ENCODE measurements at regions of chr3 and their contacts with region 1.

Region 1: GRCh38 chr3:39406368-39407258 is at the start of gene RPSA:
- DNase-seq: peak; percentile 90 to 99 (median 94)
- ATAC-seq: peak; percentile 90
- H3K4me3 ChIP-seq: peak within 1 kb of the TSS; percentile 78
- H3K4me3 Mint-ChIP-seq: peak within 1 kb of the TSS; percentile 86
- H3K27ac ChIP-seq: peak within 1 kb of the TSS; percentile 76 to 88
- H3K27ac Mint-ChIP-seq: peak within 1 kb of the TSS; percentile 88
- H3K4me1 ChIP-seq: peaks cover 38% of the 10 kb centered on the region
- H3K4me1 Mint-ChIP-seq: peaks cover 48% of the 10 kb centered on the region
- H3K27me3 ChIP-seq: no peaks in the 10 kb centered on the region
- H3K27me3 Mint-ChIP-seq: no peaks in the 10 kb centered on the region
- CTCF ChIP-seq: peak; percentile 27
- total RNA-seq, gene RPSA: 1,930 to 1,974 TPM

Region 2: DNA sequence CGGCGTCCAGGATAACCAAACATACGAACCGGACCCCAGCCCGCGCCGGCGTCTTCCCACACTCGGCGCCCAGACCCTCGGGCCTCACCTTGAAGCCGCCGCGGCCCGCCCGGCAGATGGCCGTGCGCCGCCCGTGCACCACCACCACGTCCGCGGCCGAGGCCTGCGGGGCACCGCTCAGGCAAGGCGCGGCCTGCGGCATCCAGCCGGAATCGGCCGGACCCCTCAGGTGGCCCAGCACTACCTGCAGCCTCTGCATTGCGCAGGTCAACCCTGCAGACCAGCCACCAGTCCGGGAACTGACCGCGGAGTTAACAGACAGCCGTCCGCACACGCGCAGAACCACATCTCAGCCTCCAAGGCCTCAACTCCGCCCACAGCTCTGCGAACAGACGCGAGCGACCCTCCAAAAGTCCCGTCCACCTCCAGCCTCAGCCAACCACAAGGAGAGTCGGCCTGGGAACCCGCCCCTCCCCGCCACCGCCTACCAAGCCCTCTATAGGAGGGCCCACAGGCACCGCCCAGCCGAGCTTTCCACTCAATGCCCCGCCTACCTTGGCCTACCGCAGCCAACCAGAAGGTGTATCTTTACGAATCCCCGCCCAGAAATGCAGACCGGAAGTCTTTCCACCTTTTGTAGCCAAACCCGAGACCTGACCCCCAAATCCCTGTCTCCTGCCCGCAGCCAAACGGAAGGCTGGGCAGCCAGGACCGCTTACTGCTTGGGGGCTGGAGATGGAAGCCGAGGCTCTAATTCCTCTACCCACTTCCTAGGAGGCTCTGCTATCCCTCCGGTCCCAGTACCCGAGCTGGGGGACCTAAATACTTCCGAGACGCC is 1269.6 kb before region 1 on chr3 and contains the start of gene ACAA1:
- CTCF ChIA-PET with region 1: no interaction called
- POLR2A ChIA-PET with region 1: interaction called, 3 read pairs
- intact Hi-C with region 1: loop called in 1 of 2 experiments (anchors 10 kb)
- DNase-seq: peak; percentile 91 to 99 (median 96)
- ATAC-seq: peak; percentile 84
- H3K4me3 ChIP-seq: peak within 1 kb of the TSS; percentile 95
- H3K4me3 Mint-ChIP-seq: peak within 1 kb of the TSS; percentile 99
- H3K27ac ChIP-seq: peak within 1 kb of the TSS; percentile 80 to 83
- H3K27ac Mint-ChIP-seq: peak within 1 kb of the TSS; percentile 92
- H3K4me1 ChIP-seq: peaks cover 76% of the 10 kb centered on the region
- H3K4me1 Mint-ChIP-seq: peaks cover 77% of the 10 kb centered on the region
- H3K27me3 ChIP-seq: no peaks in the 10 kb centered on the region
- H3K27me3 Mint-ChIP-seq: no peaks in the 10 kb centered on the region
- CTCF ChIP-seq: no peak
- total RNA-seq, gene ACAA1: 56.4 to 58.9 TPM

Region 3: DNA sequence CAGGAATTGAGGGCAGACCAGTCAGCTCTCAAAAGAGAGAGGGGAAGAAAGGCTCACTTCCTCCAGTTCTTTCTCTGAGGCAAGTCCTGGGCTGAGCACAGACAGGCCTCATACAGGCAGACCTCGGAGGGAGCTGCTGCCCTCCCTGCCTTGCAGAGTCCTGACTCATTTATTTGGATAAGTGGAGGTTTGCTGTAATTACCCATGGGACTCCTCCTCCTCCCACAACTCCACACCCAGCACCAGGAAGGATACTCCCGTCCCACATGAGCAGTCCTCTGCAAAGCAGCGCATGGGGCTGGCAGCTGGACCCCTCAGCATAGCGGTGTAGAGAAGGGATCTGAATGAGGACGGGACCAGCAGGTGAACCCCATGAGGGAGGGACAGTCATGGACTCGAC is 577.2 kb before region 1 on chr3:
- CTCF ChIA-PET with region 1: no interaction called
- POLR2A ChIA-PET with region 1: no interaction called
- intact Hi-C with region 1: no loop called
- DNase-seq: no peak
- ATAC-seq: no peak
- H3K4me3 ChIP-seq: no peak overlapping the region
- H3K4me3 Mint-ChIP-seq: no peak overlapping the region
- H3K27ac ChIP-seq: no peak overlapping the region
- H3K27ac Mint-ChIP-seq: no peak overlapping the region
- H3K4me1 ChIP-seq: peaks cover 5% of the 10 kb centered on the region
- H3K4me1 Mint-ChIP-seq: peaks cover 4% of the 10 kb centered on the region
- H3K27me3 ChIP-seq: no peaks in the 10 kb centered on the region
- H3K27me3 Mint-ChIP-seq: peaks cover 8% of the 10 kb centered on the region
- CTCF ChIP-seq: no peak

Region 4: GRCh38 chr3:39378088-39378487 is 28.5 kb before region 1 on chr3:
- CTCF ChIA-PET with region 1: interaction called, 12 read pairs
- POLR2A ChIA-PET with region 1: interaction called, 3 read pairs
- intact Hi-C with region 1: loop called in 1 of 2 experiments (anchors 1 kb)
- DNase-seq: peak; percentile 28 to 82 (median 50)
- ATAC-seq: peak; percentile 85
- H3K4me3 ChIP-seq: no peak overlapping the region
- H3K4me3 Mint-ChIP-seq: peak overlapping the region; percentile 26
- H3K27ac ChIP-seq: no peak overlapping the region
- H3K27ac Mint-ChIP-seq: no peak overlapping the region
- H3K4me1 ChIP-seq: peaks cover 13% of the 10 kb centered on the region
- H3K4me1 Mint-ChIP-seq: peaks cover 15% of the 10 kb centered on the region
- H3K27me3 ChIP-seq: no peaks in the 10 kb centered on the region
- H3K27me3 Mint-ChIP-seq: no peaks in the 10 kb centered on the region
- CTCF ChIP-seq: peak; percentile 82

Region 5: DNA sequence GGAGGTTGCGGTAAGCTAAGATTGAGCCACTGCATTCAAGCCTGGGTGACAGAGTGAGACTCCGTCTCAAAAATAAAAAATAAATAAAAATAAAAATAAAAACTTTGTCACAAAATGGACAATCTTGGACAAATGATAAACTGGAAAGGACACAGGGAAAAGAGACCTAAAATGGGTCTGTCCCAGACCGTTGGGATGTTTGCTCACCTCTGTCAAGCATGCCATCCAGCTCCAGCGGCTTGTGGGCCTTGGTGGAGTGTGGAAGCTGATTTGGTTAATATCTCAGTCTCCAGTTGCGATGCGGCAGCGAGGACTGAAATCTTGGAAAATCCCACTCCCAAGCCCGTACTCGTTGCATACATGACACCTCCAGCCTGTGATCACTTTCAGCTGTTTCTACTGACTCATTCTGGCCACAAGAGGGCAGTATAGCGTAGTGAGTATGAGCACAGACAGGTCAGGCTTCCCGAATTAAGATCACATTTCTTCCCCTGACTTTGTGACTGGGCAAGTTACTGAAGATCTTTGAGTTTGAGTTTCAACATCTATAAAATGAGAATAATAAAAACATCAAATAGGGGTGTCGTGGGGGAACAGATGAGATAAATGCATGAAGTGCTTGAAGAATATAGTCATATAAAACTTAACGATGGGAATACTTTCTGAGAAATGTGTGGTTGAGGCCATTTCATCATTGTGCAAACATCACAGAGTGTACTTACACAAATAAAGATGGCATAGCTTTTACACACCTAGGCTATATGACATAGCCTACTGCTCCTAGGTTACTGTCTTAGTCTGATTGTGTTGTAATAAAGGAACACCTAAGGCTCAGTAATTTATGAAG is 41.2 kb after region 1 on chr3:
- CTCF ChIA-PET with region 1: interaction called, 6 read pairs
- POLR2A ChIA-PET with region 1: interaction called, 3 read pairs
- intact Hi-C with region 1: loop called (anchors 1 to 5 kb)
- DNase-seq: peak; percentile 6 to 85 (median 44)
- ATAC-seq: peak; percentile 79
- H3K4me3 ChIP-seq: no peak overlapping the region
- H3K4me3 Mint-ChIP-seq: no peak overlapping the region
- H3K27ac ChIP-seq: no peak overlapping the region
- H3K27ac Mint-ChIP-seq: no peak overlapping the region
- H3K4me1 ChIP-seq: peaks cover 2% of the 10 kb centered on the region
- H3K4me1 Mint-ChIP-seq: no peaks in the 10 kb centered on the region
- H3K27me3 ChIP-seq: peaks cover 0 to 2% of the 10 kb centered on the region in 2 experiments
- H3K27me3 Mint-ChIP-seq: no peaks in the 10 kb centered on the region
- CTCF ChIP-seq: peak; percentile 80

Region 6: GRCh38 chr3:40309418-40309924 is 902.9 kb after region 1 on chr3 and contains the start of gene EIF1B:
- CTCF ChIA-PET with region 1: no interaction called
- POLR2A ChIA-PET with region 1: interaction called, 4 read pairs
- intact Hi-C with region 1: loop called (anchors 2 to 5 kb)
- DNase-seq: peak; percentile 96 to 99 (median 98)
- ATAC-seq: peak; percentile 89
- H3K4me3 ChIP-seq: peak within 1 kb of the TSS; percentile 93
- H3K4me3 Mint-ChIP-seq: peak within 1 kb of the TSS; percentile 100
- H3K27ac ChIP-seq: peak within 1 kb of the TSS; percentile 91 to 95
- H3K27ac Mint-ChIP-seq: peak within 1 kb of the TSS; percentile 100
- H3K4me1 ChIP-seq: peaks cover 11% of the 10 kb centered on the region
- H3K4me1 Mint-ChIP-seq: peaks cover 50% of the 10 kb centered on the region
- H3K27me3 ChIP-seq: no peaks in the 10 kb centered on the region
- H3K27me3 Mint-ChIP-seq: no peaks in the 10 kb centered on the region
- CTCF ChIP-seq: peak; percentile 90
- total RNA-seq, gene EIF1B: 112 to 120 TPM